Lower leg skin (tissue), 4 donors: ENCODE measurements at regions of chr12 and their contacts with region 1.

Region 1: DNA sequence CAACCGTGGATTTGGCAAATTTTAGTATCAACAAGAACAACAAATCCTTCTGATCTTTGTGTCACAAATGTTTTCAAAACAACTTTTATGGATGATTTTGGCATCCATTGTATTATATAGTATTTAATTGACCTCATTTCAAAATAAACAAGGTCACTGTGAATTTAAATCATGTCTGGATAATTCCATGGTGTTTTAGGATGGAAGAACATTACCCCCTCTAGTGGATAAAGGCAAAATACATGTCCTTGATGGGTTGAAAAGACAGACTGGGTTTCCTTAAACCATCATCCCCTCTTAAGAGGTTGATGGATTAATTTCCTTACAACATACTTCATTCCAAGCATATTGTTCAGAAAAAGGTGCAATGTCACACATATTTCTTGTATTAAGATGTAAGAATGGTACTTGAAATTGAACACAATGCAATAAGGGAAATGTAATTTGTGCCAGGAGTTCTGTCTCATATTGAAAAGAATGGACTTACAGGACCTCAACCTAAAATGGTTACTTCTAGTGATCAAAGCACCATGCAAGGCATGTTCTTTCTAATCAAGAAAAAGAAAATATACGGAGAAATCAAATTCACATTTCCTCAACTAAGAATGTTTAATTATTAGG is 352.0 kb downstream of the BCAT1 start:
- DNase-seq: no peak
- H3K4me3 ChIP-seq: no peak overlapping the region
- CTCF ChIP-seq: no peak
- POLR2A ChIP-seq: no peak

Region 2: DNA sequence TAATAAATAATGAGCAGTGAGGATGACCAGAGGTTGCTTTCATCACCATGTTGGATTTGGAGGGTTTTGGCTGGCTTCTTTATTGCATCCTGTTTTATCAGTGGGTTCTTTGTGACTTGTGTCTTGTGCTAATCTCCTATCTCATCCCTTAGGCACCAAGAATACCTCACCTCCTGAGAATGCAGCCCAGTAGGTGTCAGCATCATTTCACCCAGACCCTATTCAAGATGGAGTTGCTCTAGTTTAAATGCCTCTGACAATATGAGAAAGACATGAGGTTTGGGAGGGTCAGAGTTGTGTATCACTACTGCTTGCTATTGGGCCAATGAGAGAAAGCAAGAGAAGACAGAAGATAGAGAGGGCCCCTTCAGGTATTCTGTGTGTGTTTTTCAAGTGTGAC is 1379.7 kb before region 1 on chr12:
- intact Hi-C with region 1: loop called (anchors 10 kb)
- DNase-seq: no peak
- H3K4me3 ChIP-seq: no peak overlapping the region
- CTCF ChIP-seq: no peak
- POLR2A ChIP-seq: no peak